AG04450 (cell line): ENCODE measurements at regions of chr12 and their contacts with region 1.

Region 1: DNA sequence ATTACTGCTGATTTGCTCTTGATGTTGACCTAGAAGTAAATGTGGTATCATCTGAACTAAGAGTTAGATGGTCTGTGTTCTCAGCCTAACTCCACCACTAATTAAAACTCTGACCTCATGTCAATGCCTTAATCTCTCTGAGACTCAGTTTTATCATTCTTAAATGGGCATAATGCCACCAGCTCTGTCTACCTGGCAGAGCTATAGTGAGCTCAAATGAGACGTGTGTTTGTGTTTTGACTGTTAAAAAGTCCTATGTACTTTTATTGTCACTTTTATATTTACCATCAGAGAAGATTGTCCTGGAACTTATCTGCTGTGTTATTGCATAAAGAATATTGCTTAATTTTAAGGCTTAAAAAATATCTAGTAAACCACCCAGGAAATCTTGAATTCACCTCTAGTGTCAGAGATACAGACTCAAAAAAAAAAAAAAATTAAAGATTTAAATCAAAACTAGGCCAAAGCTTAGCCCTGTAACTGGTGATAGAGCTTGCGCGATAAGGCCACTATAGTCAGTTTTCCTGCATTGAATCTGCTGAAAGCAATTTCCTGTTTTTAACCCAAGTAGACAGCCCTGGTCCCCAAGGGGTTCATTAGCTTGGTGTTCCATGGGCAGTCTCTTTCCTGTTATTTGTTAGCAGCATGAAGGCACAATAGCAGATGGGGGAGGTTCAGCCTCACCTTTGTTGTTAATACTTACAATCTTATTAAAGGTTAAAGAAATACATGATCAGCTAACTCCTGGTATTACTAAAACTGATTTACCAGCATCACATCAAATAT is 261.8 kb downstream of the ATP23 start:
- DNase-seq: no peak
- H3K4me3 ChIP-seq: no peak overlapping the region
- H3K27ac ChIP-seq: no peak overlapping the region
- H3K27me3 ChIP-seq: no peaks in the 10 kb centered on the region
- CTCF ChIP-seq: no peak

Region 2: DNA sequence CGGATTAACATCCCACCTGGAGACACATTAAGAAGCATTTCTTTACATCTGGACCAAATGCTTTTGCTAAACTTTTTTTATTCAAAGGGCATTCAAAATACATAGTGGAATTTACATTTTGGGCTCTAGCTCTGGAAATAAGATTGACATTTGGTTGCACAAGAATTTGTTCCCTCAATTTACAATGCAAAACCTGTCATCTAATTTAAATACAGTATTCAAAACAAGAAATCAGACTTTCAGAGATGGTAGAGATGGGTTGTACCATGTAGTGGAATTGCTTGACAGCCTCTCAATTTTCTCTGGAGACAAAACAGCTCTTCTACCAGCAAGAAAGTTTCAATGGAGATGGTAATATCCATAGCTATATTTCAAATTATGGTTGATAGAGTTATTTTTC is 14.0 kb after region 1 on chr12:
- CTCF ChIA-PET with region 1: no interaction called
- POLR2A ChIA-PET with region 1: interaction called, 15 read pairs
- DNase-seq: no peak
- H3K4me3 ChIP-seq: no peak overlapping the region
- H3K27ac ChIP-seq: no peak overlapping the region
- H3K27me3 ChIP-seq: no peaks in the 10 kb centered on the region
- CTCF ChIP-seq: no peak